ENCODE measurements at regions of chr10 and their contacts with region 1.

Region 1: GRCh38 chr10:23158370-23158769 is 33.7 kb upstream of the PTF1A start:
- DNase-seq: peak; percentile 17 to 49 (median 34)
- H3K4me3 ChIP-seq: no peak overlapping the region
- H3K4me3 Mint-ChIP-seq: no peak overlapping the region
- H3K27ac ChIP-seq: no peak overlapping the region
- H3K27ac Mint-ChIP-seq: no peak overlapping the region
- H3K4me1 ChIP-seq: no peaks in the 10 kb centered on the region
- H3K4me1 Mint-ChIP-seq: peaks cover 2% of the 10 kb centered on the region
- H3K27me3 ChIP-seq: peaks cover 0 to 3% of the 10 kb centered on the region in 2 donors
- H3K27me3 Mint-ChIP-seq: peaks cover 9 to 21% (median 11%) of the 10 kb centered on the region in 3 donors
- CTCF ChIP-seq: peak; percentile 95

Region 2: GRCh38 chr10:23088609-23089008 is 69.8 kb before region 1 on chr10:
- intact Hi-C with region 1: no loop called
- DNase-seq: no peak
- H3K4me3 ChIP-seq: no peak overlapping the region
- H3K4me3 Mint-ChIP-seq: no peak overlapping the region
- H3K27ac ChIP-seq: no peak overlapping the region
- H3K27ac Mint-ChIP-seq: no peak overlapping the region
- H3K4me1 ChIP-seq: no peaks in the 10 kb centered on the region
- H3K4me1 Mint-ChIP-seq: no peaks in the 10 kb centered on the region
- H3K27me3 ChIP-seq: no peaks in the 10 kb centered on the region
- H3K27me3 Mint-ChIP-seq: peaks cover 0 to 3% (median 0%) of the 10 kb centered on the region in 3 donors
- CTCF ChIP-seq: no peak

Region 3: DNA sequence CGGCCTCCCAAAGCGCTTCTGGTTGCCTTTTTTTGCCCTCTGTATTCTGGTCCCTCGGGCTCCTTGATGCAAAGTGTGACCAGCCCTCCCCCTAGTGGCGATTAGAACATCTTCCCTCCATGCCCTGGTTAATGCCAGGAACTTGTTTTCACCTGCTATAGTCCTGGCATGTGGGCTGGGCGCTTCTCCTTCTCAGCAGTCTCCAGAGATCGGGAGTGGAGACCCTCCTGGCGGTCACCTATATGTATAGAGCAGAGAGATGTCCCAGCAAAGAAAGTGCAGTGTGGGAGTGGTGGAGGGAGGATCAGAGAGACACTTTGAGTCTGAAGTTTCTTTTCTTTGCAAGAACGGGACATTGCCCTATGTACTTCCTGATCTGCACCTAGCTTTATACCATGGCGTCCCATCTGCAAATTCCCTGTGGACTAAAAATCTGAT is 544.6 kb after region 1 on chr10:
- intact Hi-C with region 1: loop called in 1 of 2 experiments (anchors 10 kb)
- DNase-seq: peak; percentile 47 to 68 (median 54)
- H3K4me3 ChIP-seq: no peak overlapping the region
- H3K4me3 Mint-ChIP-seq: peak overlapping the region in 1 of 2 donors; percentile 39
- H3K27ac ChIP-seq: no peak overlapping the region
- H3K27ac Mint-ChIP-seq: peak overlapping the region in 1 of 7 donors; percentile 46
- H3K4me1 ChIP-seq: no peaks in the 10 kb centered on the region
- H3K4me1 Mint-ChIP-seq: peaks cover 6% of the 10 kb centered on the region
- H3K27me3 ChIP-seq: peaks cover 3 to 8% of the 10 kb centered on the region in 2 donors
- H3K27me3 Mint-ChIP-seq: peaks cover 2 to 18% (median 9%) of the 10 kb centered on the region in 3 donors
- CTCF ChIP-seq: peak; percentile 78

Region 4: GRCh38 chr10:24202181-24202570 is 1043.8 kb after region 1 on chr10:
- intact Hi-C with region 1: loop called (anchors 2 to 5 kb)
- DNase-seq: no peak
- H3K4me3 ChIP-seq: no peak overlapping the region
- H3K4me3 Mint-ChIP-seq: no peak overlapping the region
- H3K27ac ChIP-seq: no peak overlapping the region
- H3K27ac Mint-ChIP-seq: peak overlapping the region in 1 of 7 donors; percentile 16
- H3K4me1 ChIP-seq: no peaks in the 10 kb centered on the region
- H3K4me1 Mint-ChIP-seq: no peaks in the 10 kb centered on the region
- H3K27me3 ChIP-seq: no peaks in the 10 kb centered on the region
- H3K27me3 Mint-ChIP-seq: peaks cover 4 to 11% (median 8%) of the 10 kb centered on the region in 3 donors
- CTCF ChIP-seq: no peak

Region 5: GRCh38 chr10:24518981-24519597 is 1360.7 kb after region 1 on chr10:
- intact Hi-C with region 1: loop called in 1 of 2 experiments (anchors 10 kb)
- DNase-seq: peak in 1 of 3 donors; percentile 1
- H3K4me3 ChIP-seq: no peak overlapping the region
- H3K4me3 Mint-ChIP-seq: no peak overlapping the region
- H3K27ac ChIP-seq: no peak overlapping the region
- H3K27ac Mint-ChIP-seq: no peak overlapping the region
- H3K4me1 ChIP-seq: no peaks in the 10 kb centered on the region
- H3K4me1 Mint-ChIP-seq: peaks cover 2% of the 10 kb centered on the region
- H3K27me3 ChIP-seq: no peaks in the 10 kb centered on the region
- H3K27me3 Mint-ChIP-seq: peaks cover 5 to 13% (median 8%) of the 10 kb centered on the region in 3 donors
- CTCF ChIP-seq: peak; percentile 60

Measured in CD14-positive monocyte (primary cell).